ENCODE measurements at regions of chr15 and their contacts with region 1.

Region 1: GRCh38 chr15:78108299-78109084 is 16.1 kb downstream of the SH2D7 start:
- DNase-seq: peak; percentile 87
- H3K4me3 ChIP-seq: peak overlapping the region in 1 of 2 experiments; percentile 4; a peak in 1 of 4 replicates
- H3K27ac ChIP-seq: no peak overlapping the region
- H3K4me1 ChIP-seq: no peaks in the 10 kb centered on the region; a peak in 1 of 4 replicates
- H3K27me3 ChIP-seq: no peaks in the 10 kb centered on the region
- CTCF ChIP-seq: peak; percentile 93
- EP300 ChIP-seq: no peak
- RAD21 ChIP-seq: peak; percentile 88

Region 2: DNA sequence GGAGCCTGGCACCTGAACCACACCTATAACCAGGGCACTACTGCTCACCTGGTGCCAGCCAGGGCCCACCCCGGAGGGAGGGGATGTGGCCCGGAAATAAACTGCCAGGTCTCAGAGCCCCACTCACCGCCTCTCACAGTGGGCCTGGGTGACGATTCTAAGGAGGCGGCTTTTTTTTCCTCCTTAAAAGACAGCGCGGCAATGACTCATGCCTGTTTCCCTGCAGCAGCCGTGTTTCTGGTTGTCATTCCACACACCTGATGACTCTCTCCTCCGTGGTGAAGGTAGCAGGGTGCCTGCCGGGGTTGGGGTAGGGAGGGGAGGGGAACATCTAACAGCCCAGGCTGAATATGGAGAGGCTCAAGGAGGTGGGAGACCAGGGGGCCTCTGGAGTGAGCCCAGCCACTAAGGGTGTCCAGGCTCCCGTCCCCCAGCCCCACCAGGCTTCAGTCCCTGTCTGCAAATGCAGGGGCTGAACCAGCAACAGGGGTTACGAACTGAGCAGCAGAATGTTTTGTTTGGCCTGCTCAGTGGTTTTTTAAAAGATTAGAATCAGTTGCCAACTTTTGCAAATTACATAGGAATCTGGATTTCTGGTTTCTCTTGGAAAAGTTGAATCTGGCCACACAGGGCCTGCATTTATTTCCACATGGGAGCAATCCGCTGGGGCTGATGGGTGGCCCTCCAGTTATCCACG is 348.4 kb before region 1 on chr15:
- CTCF ChIA-PET with region 1: no interaction called
- POLR2A ChIA-PET with region 1: no interaction called
- DNase-seq: peak; percentile 51
- H3K4me3 ChIP-seq: no peak overlapping the region
- H3K27ac ChIP-seq: no peak overlapping the region; a peak in 1 of 4 replicates
- H3K4me1 ChIP-seq: peaks cover 2 to 8% of the 10 kb centered on the region in 2 experiments; a peak in 2 of 4 replicates
- H3K27me3 ChIP-seq: no peaks in the 10 kb centered on the region
- CTCF ChIP-seq: no peak
- EP300 ChIP-seq: no peak
- RAD21 ChIP-seq: no peak

Region 3: GRCh38 chr15:77889009-77889806 is 219.3 kb before region 1 on chr15:
- CTCF ChIA-PET with region 1: no interaction called
- POLR2A ChIA-PET with region 1: no interaction called
- DNase-seq: no peak
- H3K4me3 ChIP-seq: no peak overlapping the region
- H3K27ac ChIP-seq: peak overlapping the region in 1 of 2 experiments; percentile 39; a peak in 2 of 4 replicates
- H3K4me1 ChIP-seq: peaks cover 3 to 33% of the 10 kb centered on the region in 2 experiments; a peak in 1 of 4 replicates
- H3K27me3 ChIP-seq: no peaks in the 10 kb centered on the region
- CTCF ChIP-seq: no peak
- EP300 ChIP-seq: no peak
- RAD21 ChIP-seq: no peak

Region 4: GRCh38 chr15:77901974-77902750 is 206.3 kb before region 1 on chr15:
- CTCF ChIA-PET with region 1: interaction called, 14 read pairs
- POLR2A ChIA-PET with region 1: no interaction called
- DNase-seq: peak; percentile 52
- H3K4me3 ChIP-seq: no peak overlapping the region
- H3K27ac ChIP-seq: no peak overlapping the region
- H3K4me1 ChIP-seq: no peaks in the 10 kb centered on the region; a peak in 1 of 4 replicates
- H3K27me3 ChIP-seq: no peaks in the 10 kb centered on the region
- CTCF ChIP-seq: no peak; the same call in 1 of the 2 replicates
- EP300 ChIP-seq: no peak
- RAD21 ChIP-seq: peak; percentile 12; the same call in 1 of the 2 replicates

Region 5: DNA sequence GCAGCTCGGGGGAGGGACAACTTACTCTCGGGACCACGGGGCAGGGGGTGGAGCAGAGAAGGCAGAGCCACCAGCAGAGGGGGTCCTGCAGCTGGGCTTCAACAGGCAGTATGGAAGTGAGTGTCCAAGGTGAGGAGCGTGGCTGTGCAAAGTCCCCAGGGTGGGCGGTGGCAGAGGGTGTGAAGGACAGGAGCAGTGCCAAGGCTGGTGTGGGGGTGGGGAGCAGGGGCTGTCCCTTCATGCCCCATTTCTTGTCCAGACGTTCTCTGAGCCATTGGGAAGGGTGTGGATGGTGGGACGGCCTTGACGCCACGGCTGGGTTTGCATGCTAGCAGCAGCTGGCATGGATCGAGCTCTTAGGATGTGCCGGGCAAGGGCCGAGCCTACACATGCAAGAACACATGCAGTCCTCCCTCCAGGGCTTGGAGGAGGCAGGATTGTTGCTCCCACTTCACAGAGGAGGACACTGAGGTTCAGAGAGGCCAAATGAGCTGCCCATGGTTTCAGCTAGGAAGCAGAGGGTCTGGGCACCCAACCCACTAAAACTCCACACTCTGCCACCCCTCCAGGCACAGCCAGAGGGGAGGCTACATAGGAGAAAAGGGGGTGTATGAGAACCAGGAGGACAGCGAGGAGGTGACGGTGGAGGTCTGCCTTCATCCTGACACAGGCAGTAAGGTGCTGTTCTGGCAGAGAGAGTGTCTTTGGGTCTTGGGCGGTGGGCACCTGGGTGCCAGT is 124.6 kb before region 1 on chr15:
- CTCF ChIA-PET with region 1: interaction called, 14 read pairs
- POLR2A ChIA-PET with region 1: no interaction called
- DNase-seq: no peak
- H3K4me3 ChIP-seq: no peak overlapping the region
- H3K27ac ChIP-seq: no peak overlapping the region
- H3K4me1 ChIP-seq: peaks cover 0 to 43% of the 10 kb centered on the region in 2 experiments; a peak in 1 of 4 replicates
- H3K27me3 ChIP-seq: no peaks in the 10 kb centered on the region
- CTCF ChIP-seq: no peak
- EP300 ChIP-seq: no peak
- RAD21 ChIP-seq: peak; percentile 43

Region 6: DNA sequence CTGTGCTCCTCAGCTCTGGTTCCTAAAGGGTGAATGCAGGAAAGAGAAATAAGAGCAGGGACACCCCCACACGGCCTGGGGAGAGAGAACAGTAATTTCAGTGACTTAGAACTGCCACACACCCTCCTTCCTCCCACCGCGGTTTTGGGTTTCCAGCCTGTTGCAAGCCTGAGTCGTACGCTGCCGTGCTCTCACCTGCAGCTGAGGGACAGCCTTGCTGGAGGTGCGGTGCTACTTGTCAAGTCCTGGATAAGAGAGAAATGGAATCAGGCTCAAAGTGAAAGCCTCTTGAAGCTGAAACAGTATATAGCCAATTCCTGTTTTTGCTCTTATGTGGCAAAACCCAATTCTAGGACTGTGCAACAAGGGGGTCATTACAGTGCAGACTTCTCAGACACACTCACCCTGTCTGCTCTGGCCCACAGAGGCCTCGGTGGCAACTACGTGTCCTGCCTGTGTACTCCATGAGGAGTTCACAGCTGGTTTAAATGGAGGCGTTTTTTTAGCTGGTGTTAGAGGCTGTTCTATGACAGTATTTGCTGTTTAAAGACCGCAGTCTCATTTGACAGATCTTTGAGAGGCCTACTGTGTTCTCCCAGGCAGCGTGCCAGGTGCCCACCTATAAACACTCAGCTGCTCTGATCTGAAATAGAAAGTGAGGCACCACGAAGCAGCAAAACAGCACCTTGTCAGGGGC is 73.8 kb before region 1 on chr15:
- CTCF ChIA-PET with region 1: interaction called, 11 read pairs
- POLR2A ChIA-PET with region 1: no interaction called
- DNase-seq: no peak
- H3K4me3 ChIP-seq: no peak overlapping the region
- H3K27ac ChIP-seq: no peak overlapping the region
- H3K4me1 ChIP-seq: peaks cover 4 to 5% of the 10 kb centered on the region in 2 experiments; a peak in 1 of 4 replicates
- H3K27me3 ChIP-seq: no peaks in the 10 kb centered on the region
- CTCF ChIP-seq: no peak
- EP300 ChIP-seq: no peak
- RAD21 ChIP-seq: no peak

Region 7: DNA sequence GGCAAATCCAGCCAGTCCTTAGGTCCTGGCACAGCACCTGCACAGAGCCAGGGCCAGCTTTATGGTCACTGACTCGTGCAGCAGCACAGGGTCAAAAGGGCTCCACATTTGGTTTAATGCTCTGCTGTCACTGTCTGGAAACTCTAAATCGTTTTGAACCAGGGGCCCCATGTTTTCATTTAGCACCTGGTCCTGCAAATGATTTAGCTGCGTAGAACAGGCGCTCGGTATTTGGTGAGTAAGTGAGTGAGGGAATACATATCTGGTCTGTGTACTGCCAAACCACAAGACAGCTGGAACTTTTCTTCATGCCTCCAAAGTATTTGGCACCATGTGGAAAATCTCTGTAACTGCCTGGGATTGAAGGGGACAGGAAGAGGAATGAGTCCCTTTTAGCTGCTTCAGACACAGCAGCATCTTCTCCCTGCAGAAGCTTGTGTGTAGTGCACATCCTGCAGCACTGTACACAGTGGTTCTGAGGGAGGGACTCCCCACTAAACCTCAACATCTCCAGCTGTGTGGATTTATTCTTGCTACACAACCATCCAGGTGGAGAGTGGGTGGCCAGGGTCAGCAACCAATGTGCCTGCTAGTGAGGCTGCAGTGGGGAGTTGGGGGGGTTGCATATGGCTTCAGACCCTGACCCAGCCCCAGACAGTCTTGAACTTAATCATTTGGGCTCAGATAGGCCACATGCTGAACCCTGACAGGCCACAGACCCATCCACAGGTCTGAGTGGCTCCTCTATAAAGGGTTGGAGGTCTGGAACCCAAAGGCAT is 15.1 kb before region 1 on chr15:
- CTCF ChIA-PET with region 1: interaction called, 26 read pairs
- POLR2A ChIA-PET with region 1: interaction called, 3 read pairs
- DNase-seq: no peak
- H3K4me3 ChIP-seq: no peak overlapping the region
- H3K27ac ChIP-seq: peak overlapping the region in 1 of 2 experiments; percentile 54; a peak in 3 of 4 replicates
- H3K4me1 ChIP-seq: peaks cover 0 to 24% of the 10 kb centered on the region in 2 experiments; a peak in 2 of 4 replicates
- H3K27me3 ChIP-seq: no peaks in the 10 kb centered on the region
- CTCF ChIP-seq: no peak
- EP300 ChIP-seq: peak; percentile 72 to 96
- RAD21 ChIP-seq: no peak

Region 8: GRCh38 chr15:78170848-78171773 is 62.6 kb after region 1 on chr15:
- CTCF ChIA-PET with region 1: interaction called, 11 read pairs
- POLR2A ChIA-PET with region 1: no interaction called
- DNase-seq: no peak
- H3K4me3 ChIP-seq: no peak overlapping the region
- H3K27ac ChIP-seq: no peak overlapping the region
- H3K4me1 ChIP-seq: no peaks in the 10 kb centered on the region
- H3K27me3 ChIP-seq: no peaks in the 10 kb centered on the region
- CTCF ChIP-seq: no peak
- EP300 ChIP-seq: no peak
- RAD21 ChIP-seq: no peak

Measured in SK-N-SH (cell line).